Naive thymus-derived CD8-positive, alpha-beta T cell (primary cell): ENCODE measurements at regions of chr9 and their contacts with region 1.

Region 1: GRCh38 chr9:121368745-121369144 is 1.3 kb downstream of the STOM start:
- DNase-seq: peak in 1 of 10 donors; percentile 13
- ATAC-seq: no peak
- H3K4me3 Mint-ChIP-seq: peak overlapping the region; percentile 85 to 96 (median 94)
- H3K27ac Mint-ChIP-seq: peak overlapping the region in 9 of 10 donors; percentile 11 to 99 (median 83)
- H3K4me1 Mint-ChIP-seq: peaks cover 19 to 76% (median 50%) of the 10 kb centered on the region in 4 donors
- H3K27me3 Mint-ChIP-seq: no peaks in the 10 kb centered on the region

Region 2: DNA sequence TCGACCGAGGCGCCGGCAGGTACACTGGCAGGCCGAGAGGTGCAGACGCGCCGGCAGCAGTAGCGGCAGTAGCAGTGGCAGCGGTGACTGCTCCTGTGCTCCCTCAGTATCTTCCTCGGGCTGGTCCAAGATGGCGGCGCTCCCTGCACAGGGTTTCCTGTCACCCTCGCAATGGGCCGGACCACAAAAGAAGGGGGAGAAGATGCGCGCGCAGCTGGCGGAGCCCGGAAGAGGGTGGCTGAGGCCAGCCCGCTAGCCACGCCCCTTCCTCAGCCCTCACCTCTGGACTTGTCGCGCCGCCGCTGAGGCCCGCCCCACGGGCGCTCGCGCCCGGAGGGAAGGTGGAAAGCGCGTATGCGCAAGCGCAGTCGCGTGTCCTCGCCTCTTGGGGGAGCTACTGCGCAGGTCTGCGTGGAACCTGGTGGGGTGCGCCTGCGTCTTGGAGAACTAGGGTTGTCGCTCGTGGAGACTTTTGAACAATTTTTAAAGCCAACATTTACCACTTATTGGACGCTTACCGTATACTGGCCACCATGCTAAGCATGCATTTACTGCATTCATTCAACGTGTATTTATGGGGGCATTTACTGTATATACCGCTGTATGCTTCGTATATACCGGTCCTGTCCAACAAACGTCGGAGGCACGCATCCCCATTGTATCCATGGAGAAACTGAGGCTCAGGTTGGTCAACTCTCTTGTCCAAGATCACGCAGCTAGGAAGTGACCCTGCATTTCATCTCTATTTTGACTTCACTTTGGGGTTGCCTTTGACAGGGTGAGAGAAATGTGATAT is 166.8 kb before region 1 on chr9 and contains the start of gene RAB14:
- POLR2A ChIA-PET with region 1: no interaction called
- DNase-seq: peak; percentile 99 to 100 (median 100)
- ATAC-seq: peak; percentile 87
- H3K4me3 Mint-ChIP-seq: peak within 1 kb of the TSS; percentile 78 to 98 (median 94)
- H3K27ac Mint-ChIP-seq: peak within 1 kb of the TSS; percentile 89 to 99 (median 98)
- H3K4me1 Mint-ChIP-seq: peaks cover 21 to 62% (median 42%) of the 10 kb centered on the region in 4 donors
- H3K27me3 Mint-ChIP-seq: no peaks in the 10 kb centered on the region
- polyA plus RNA-seq, gene RAB14: 34.6 to 37.2 (median 36.8) TPM

Region 3: GRCh38 chr9:121340676-121341392 is 27.9 kb before region 1 on chr9:
- POLR2A ChIA-PET with region 1: no interaction called
- DNase-seq: no peak
- ATAC-seq: no peak
- H3K4me3 Mint-ChIP-seq: no peak overlapping the region
- H3K27ac Mint-ChIP-seq: no peak overlapping the region
- H3K4me1 Mint-ChIP-seq: peaks cover 0 to 15% (median 1%) of the 10 kb centered on the region in 4 donors
- H3K27me3 Mint-ChIP-seq: no peaks in the 10 kb centered on the region

Region 4: DNA sequence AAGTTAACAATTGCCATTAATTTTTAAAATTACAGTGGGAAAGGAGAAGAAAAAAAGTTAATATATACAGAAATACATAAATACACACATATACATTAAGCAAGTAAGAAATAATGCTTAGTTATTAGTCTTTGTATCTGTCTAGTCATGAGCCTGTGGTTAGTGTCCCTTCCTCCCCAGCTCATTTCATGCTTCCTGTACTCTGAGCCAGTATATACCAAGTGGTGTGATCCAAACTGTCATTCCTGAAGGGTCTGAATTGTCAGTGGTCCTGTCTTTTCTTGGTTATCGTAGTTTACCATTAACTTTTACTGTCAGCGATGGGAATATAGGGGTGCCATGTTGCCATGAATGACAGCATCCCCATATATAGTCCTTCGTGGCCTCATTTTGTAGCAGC is 25.5 kb after region 1 on chr9:
- POLR2A ChIA-PET with region 1: interaction called, 10 read pairs
- DNase-seq: no peak
- ATAC-seq: no peak
- H3K4me3 Mint-ChIP-seq: no peak overlapping the region
- H3K27ac Mint-ChIP-seq: no peak overlapping the region
- H3K4me1 Mint-ChIP-seq: peaks cover 0 to 9% (median 9%) of the 10 kb centered on the region in 4 donors
- H3K27me3 Mint-ChIP-seq: no peaks in the 10 kb centered on the region

Region 5: GRCh38 chr9:121498150-121498486 is 129.4 kb after region 1 on chr9:
- POLR2A ChIA-PET with region 1: no interaction called
- DNase-seq: peak in 7 of 10 donors; percentile 11 to 68 (median 26)
- ATAC-seq: peak; percentile 63 to 72
- H3K4me3 Mint-ChIP-seq: peak overlapping the region; percentile 66 to 84 (median 78)
- H3K27ac Mint-ChIP-seq: no peak overlapping the region
- H3K4me1 Mint-ChIP-seq: peaks cover 12 to 39% (median 23%) of the 10 kb centered on the region in 4 donors
- H3K27me3 Mint-ChIP-seq: peaks cover 35 to 70% (median 50%) of the 10 kb centered on the region in 5 donors